B cell (primary cell): ENCODE measurements at regions of chr10 and their contacts with region 1.

Region 1: GRCh38 chr10:79374312-79375191 is 27.3 kb downstream of the PPIF start:
- DNase-seq: peak; percentile 74
- ATAC-seq: peak; percentile 84
- H3K4me3 ChIP-seq: no peak overlapping the region
- H3K4me3 Mint-ChIP-seq: no peak overlapping the region
- H3K27ac ChIP-seq: no peak overlapping the region
- H3K27ac Mint-ChIP-seq: peak overlapping the region; percentile 7
- H3K4me1 ChIP-seq: peaks cover 0 to 2% of the 10 kb centered on the region in 2 donors
- H3K4me1 Mint-ChIP-seq: peaks cover 5% of the 10 kb centered on the region
- H3K27me3 ChIP-seq: peaks cover 0 to 4% (median 0%) of the 10 kb centered on the region in 4 experiments
- H3K27me3 Mint-ChIP-seq: peaks cover 6% of the 10 kb centered on the region
- CTCF ChIP-seq: peak; percentile 99

Region 2: GRCh38 chr10:78717200-78717599 is 657.4 kb before region 1 on chr10:
- CTCF ChIA-PET with region 1: no interaction called
- POLR2A ChIA-PET with region 1: no interaction called
- intact Hi-C with region 1: no loop called
- DNase-seq: no peak
- ATAC-seq: no peak
- H3K4me3 ChIP-seq: no peak overlapping the region
- H3K4me3 Mint-ChIP-seq: no peak overlapping the region
- H3K27ac ChIP-seq: no peak overlapping the region
- H3K27ac Mint-ChIP-seq: no peak overlapping the region
- H3K4me1 ChIP-seq: no peaks in the 10 kb centered on the region
- H3K4me1 Mint-ChIP-seq: no peaks in the 10 kb centered on the region
- H3K27me3 ChIP-seq: peaks cover 0 to 12% (median under 1%) of the 10 kb centered on the region in 4 experiments
- H3K27me3 Mint-ChIP-seq: peaks cover 23% of the 10 kb centered on the region
- CTCF ChIP-seq: no peak

Region 3: GRCh38 chr10:79358783-79359182 is 15.8 kb before region 1 on chr10:
- CTCF ChIA-PET with region 1: interaction called, 15 read pairs
- POLR2A ChIA-PET with region 1: no interaction called
- intact Hi-C with region 1: no loop called
- DNase-seq: no peak
- ATAC-seq: no peak
- H3K4me3 ChIP-seq: no peak overlapping the region
- H3K4me3 Mint-ChIP-seq: no peak overlapping the region
- H3K27ac ChIP-seq: no peak overlapping the region
- H3K27ac Mint-ChIP-seq: no peak overlapping the region
- H3K4me1 ChIP-seq: peaks cover 22 to 44% of the 10 kb centered on the region in 2 donors
- H3K4me1 Mint-ChIP-seq: peaks cover 38% of the 10 kb centered on the region
- H3K27me3 ChIP-seq: no peaks in the 10 kb centered on the region
- H3K27me3 Mint-ChIP-seq: no peaks in the 10 kb centered on the region
- CTCF ChIP-seq: no peak

Region 4: GRCh38 chr10:79390551-79391209 is 16.1 kb after region 1 on chr10:
- CTCF ChIA-PET with region 1: interaction called, 14 read pairs
- POLR2A ChIA-PET with region 1: no interaction called
- intact Hi-C with region 1: loop called (anchors 2 kb)
- DNase-seq: no peak
- ATAC-seq: no peak
- H3K4me3 ChIP-seq: no peak overlapping the region
- H3K4me3 Mint-ChIP-seq: no peak overlapping the region
- H3K27ac ChIP-seq: no peak overlapping the region
- H3K27ac Mint-ChIP-seq: no peak overlapping the region
- H3K4me1 ChIP-seq: peaks cover 4 to 15% of the 10 kb centered on the region in 2 donors
- H3K4me1 Mint-ChIP-seq: peaks cover 18% of the 10 kb centered on the region
- H3K27me3 ChIP-seq: no peaks in the 10 kb centered on the region
- H3K27me3 Mint-ChIP-seq: no peaks in the 10 kb centered on the region
- CTCF ChIP-seq: no peak

Region 5: DNA sequence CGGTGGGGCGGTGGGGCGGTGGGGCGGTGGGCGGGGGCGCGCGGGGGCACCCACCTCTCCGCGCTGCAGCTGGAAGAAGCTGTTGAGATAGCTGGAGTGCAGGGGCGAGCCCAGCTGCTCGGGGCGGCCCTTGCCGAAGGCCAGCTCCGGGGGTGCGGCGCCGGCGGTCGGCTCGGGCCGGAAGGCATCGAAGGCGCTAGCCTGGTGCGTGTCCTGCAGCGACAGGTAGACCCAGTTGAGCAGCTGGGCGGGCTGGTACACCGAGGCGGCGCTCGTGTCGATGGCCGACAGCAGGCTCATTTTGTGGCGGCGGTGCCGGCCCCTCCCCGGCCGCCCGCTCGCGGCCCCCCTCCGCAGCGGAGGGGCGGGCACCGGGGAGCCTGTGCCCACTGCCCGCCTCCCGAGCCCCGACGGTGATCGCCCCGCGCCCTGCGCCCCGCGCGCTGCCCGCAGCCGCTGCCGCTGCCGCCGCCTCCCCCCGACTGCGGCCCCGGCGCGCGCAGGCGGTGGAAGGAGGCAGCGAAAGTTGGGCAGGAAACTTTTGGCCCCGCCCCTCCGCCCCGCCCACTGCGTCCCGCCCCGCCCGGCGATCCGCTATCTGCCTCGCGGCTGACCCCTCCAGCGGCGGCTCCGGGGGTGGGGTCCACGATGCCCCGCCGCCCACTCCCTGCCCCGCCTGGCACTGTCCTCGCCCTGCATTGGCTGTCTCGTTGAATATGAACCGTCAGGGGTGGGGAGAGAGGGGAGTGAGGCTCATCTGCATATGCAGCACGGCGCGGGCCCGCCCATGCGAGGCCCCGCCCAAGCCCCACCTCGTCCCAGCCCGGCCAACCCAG is 70.8 kb after region 1 on chr10 and contains the start of gene ZCCHC24:
- CTCF ChIA-PET with region 1: interaction called, 19 read pairs
- POLR2A ChIA-PET with region 1: no interaction called
- intact Hi-C with region 1: no loop called
- DNase-seq: peak; percentile 97
- ATAC-seq: peak; percentile 91
- H3K4me3 ChIP-seq: peak within 1 kb of the TSS; percentile 44 to 73 (median 65)
- H3K4me3 Mint-ChIP-seq: peak within 1 kb of the TSS; percentile 94
- H3K27ac ChIP-seq: no peak within 1 kb of the TSS
- H3K27ac Mint-ChIP-seq: peak within 1 kb of the TSS; percentile 86
- H3K4me1 ChIP-seq: peaks cover 18 to 29% of the 10 kb centered on the region in 2 donors
- H3K4me1 Mint-ChIP-seq: peaks cover 26% of the 10 kb centered on the region
- H3K27me3 ChIP-seq: peaks cover 0 to 12% (median 5%) of the 10 kb centered on the region in 4 experiments
- H3K27me3 Mint-ChIP-seq: no peaks in the 10 kb centered on the region
- CTCF ChIP-seq: no peak
- total RNA-seq, gene ZCCHC24: 2.1 and 2.3 TPM in 2 replicates

Region 6: DNA sequence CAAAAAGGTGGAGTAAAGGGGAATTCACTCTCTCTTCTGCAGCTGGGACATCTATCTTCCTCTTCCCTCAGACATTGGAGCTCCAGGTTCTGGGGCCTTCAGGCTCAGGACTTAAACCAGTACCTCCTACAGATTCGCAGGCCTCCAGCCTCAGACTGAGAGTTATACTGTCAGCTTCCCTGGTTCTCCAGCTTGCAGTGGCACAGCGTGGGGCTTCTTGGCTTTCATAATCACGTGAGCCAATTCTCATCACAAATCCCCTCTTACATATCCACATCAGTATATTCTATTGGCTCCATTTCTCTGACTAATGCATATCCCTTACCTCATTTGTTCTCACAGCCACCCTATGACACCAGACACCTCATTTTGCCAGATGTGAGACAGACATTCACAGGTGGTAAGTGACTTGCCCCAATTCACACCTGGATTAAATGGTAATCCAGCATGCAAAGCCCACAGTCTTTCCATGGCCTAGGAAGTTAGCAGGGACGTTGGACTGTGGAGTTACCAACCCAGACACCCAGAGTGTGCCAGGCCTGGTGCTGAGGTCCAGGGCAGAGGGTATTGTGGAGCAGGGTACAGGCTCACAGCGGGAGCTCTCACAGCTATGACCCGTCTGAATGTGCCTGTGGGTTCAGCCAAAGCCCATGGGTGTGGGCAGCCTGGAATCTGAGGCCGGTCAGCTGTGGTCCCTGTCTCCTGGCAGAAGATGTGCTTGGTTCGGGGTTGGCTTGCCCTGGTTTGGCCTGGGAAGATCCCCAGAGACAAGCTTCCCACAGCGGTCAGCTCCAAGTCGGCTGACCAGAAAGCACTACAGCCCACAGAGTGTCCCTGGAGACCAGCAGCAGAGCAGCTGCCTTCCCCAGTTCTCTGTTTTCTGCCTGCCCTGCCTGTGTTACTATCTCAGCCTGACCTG is 89.3 kb after region 1 on chr10:
- CTCF ChIA-PET with region 1: interaction called, 65 read pairs
- POLR2A ChIA-PET with region 1: no interaction called
- intact Hi-C with region 1: loop called (anchors 1 kb)
- DNase-seq: no peak
- ATAC-seq: no peak
- H3K4me3 ChIP-seq: no peak overlapping the region
- H3K4me3 Mint-ChIP-seq: no peak overlapping the region
- H3K27ac ChIP-seq: no peak overlapping the region
- H3K27ac Mint-ChIP-seq: no peak overlapping the region
- H3K4me1 ChIP-seq: no peaks in the 10 kb centered on the region
- H3K4me1 Mint-ChIP-seq: no peaks in the 10 kb centered on the region
- H3K27me3 ChIP-seq: peaks cover 0 to 8% (median 6%) of the 10 kb centered on the region in 4 experiments
- H3K27me3 Mint-ChIP-seq: peaks cover 12% of the 10 kb centered on the region
- CTCF ChIP-seq: no peak

Region 7: GRCh38 chr10:79487296-79488194 is 113.0 kb after region 1 on chr10:
- CTCF ChIA-PET with region 1: interaction called, 124 read pairs
- POLR2A ChIA-PET with region 1: no interaction called
- intact Hi-C with region 1: loop called (anchors 1 kb)
- DNase-seq: peak; percentile 58
- ATAC-seq: peak; percentile 65
- H3K4me3 ChIP-seq: no peak overlapping the region
- H3K4me3 Mint-ChIP-seq: no peak overlapping the region
- H3K27ac ChIP-seq: no peak overlapping the region
- H3K27ac Mint-ChIP-seq: no peak overlapping the region
- H3K4me1 ChIP-seq: no peaks in the 10 kb centered on the region
- H3K4me1 Mint-ChIP-seq: no peaks in the 10 kb centered on the region
- H3K27me3 ChIP-seq: no peaks in the 10 kb centered on the region
- H3K27me3 Mint-ChIP-seq: peaks cover 7% of the 10 kb centered on the region
- CTCF ChIP-seq: peak; percentile 67